CD8-positive, alpha-beta T cell (primary cell): ENCODE measurements at regions of chr7 and their contacts with region 1.

Region 1: GRCh38 chr7:5704534-5704922 is 76.9 kb downstream of the RNF216 start:
- DNase-seq: peak; percentile 53 to 87 (median 73)
- ATAC-seq: peak; percentile 18
- H3K4me3 ChIP-seq: no peak overlapping the region
- H3K4me3 Mint-ChIP-seq: no peak overlapping the region
- H3K27ac ChIP-seq: no peak overlapping the region
- H3K27ac Mint-ChIP-seq: no peak overlapping the region
- H3K4me1 ChIP-seq: peaks cover 27% of the 10 kb centered on the region
- H3K4me1 Mint-ChIP-seq: peaks cover 34% of the 10 kb centered on the region
- H3K27me3 ChIP-seq: no peaks in the 10 kb centered on the region
- H3K27me3 Mint-ChIP-seq: no peaks in the 10 kb centered on the region
- CTCF ChIP-seq: peak; percentile 87

Region 2: GRCh38 chr7:5396999-5397663 is 307.4 kb before region 1 on chr7:
- CTCF ChIA-PET with region 1: no interaction called
- POLR2A ChIA-PET with region 1: no interaction called
- intact Hi-C with region 1: loop called in 1 of 2 experiments (anchors 10 kb)
- DNase-seq: peak; percentile 81 to 99 (median 92)
- ATAC-seq: peak; percentile 91
- H3K4me3 ChIP-seq: peak overlapping the region; percentile 83 to 96
- H3K4me3 Mint-ChIP-seq: peak overlapping the region; percentile 82
- H3K27ac ChIP-seq: peak overlapping the region; percentile 84 to 95
- H3K27ac Mint-ChIP-seq: peak overlapping the region; percentile 81
- H3K4me1 ChIP-seq: peaks cover 31% of the 10 kb centered on the region
- H3K4me1 Mint-ChIP-seq: peaks cover 26% of the 10 kb centered on the region
- H3K27me3 ChIP-seq: no peaks in the 10 kb centered on the region
- H3K27me3 Mint-ChIP-seq: no peaks in the 10 kb centered on the region
- CTCF ChIP-seq: no peak

Region 3: DNA sequence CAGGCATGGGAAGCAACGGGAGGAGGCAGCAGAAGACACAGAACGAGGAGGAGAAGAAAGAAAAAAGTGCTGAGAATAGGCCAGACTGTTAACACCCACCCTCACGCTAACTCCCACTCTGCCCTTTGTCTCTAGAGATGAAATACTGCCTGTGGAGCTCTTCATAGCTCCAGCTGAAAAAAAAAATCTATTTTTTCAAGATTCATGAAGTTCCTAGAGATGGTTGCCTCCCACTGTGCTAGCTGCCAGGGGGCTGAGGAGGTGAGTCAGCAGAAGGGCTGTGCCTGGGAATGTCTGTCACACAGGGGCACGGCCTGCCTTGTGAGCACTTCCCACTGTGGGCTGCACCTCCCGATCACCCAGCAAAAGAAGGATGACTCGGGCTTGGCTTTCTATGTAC is 67.6 kb before region 1 on chr7:
- CTCF ChIA-PET with region 1: interaction called, 3 read pairs
- POLR2A ChIA-PET with region 1: no interaction called
- intact Hi-C with region 1: loop called in 1 of 2 experiments (anchors 5 kb)
- DNase-seq: no peak
- ATAC-seq: no peak
- H3K4me3 ChIP-seq: no peak overlapping the region
- H3K4me3 Mint-ChIP-seq: no peak overlapping the region
- H3K27ac ChIP-seq: no peak overlapping the region
- H3K27ac Mint-ChIP-seq: no peak overlapping the region
- H3K4me1 ChIP-seq: peaks cover 15% of the 10 kb centered on the region
- H3K4me1 Mint-ChIP-seq: peaks cover 27% of the 10 kb centered on the region
- H3K27me3 ChIP-seq: no peaks in the 10 kb centered on the region
- H3K27me3 Mint-ChIP-seq: no peaks in the 10 kb centered on the region
- CTCF ChIP-seq: no peak

Region 4: GRCh38 chr7:5677538-5678294 is 26.8 kb before region 1 on chr7:
- CTCF ChIA-PET with region 1: interaction called, 17 read pairs
- POLR2A ChIA-PET with region 1: interaction called, 3 read pairs
- intact Hi-C with region 1: no loop called
- DNase-seq: peak in 6 of 9 experiments; percentile 17 to 66 (median 48)
- ATAC-seq: peak; percentile 54
- H3K4me3 ChIP-seq: no peak overlapping the region
- H3K4me3 Mint-ChIP-seq: no peak overlapping the region
- H3K27ac ChIP-seq: no peak overlapping the region
- H3K27ac Mint-ChIP-seq: peak overlapping the region; percentile 30
- H3K4me1 ChIP-seq: peaks cover 36% of the 10 kb centered on the region
- H3K4me1 Mint-ChIP-seq: peaks cover 58% of the 10 kb centered on the region
- H3K27me3 ChIP-seq: no peaks in the 10 kb centered on the region
- H3K27me3 Mint-ChIP-seq: no peaks in the 10 kb centered on the region
- CTCF ChIP-seq: peak; percentile 27

Region 5: GRCh38 chr7:6148724-6149360 is 444.3 kb after region 1 on chr7:
- CTCF ChIA-PET with region 1: no interaction called
- POLR2A ChIA-PET with region 1: no interaction called
- intact Hi-C with region 1: no loop called
- DNase-seq: no peak
- ATAC-seq: no peak
- H3K4me3 ChIP-seq: no peak overlapping the region
- H3K4me3 Mint-ChIP-seq: no peak overlapping the region
- H3K27ac ChIP-seq: no peak overlapping the region
- H3K27ac Mint-ChIP-seq: no peak overlapping the region
- H3K4me1 ChIP-seq: no peaks in the 10 kb centered on the region
- H3K4me1 Mint-ChIP-seq: no peaks in the 10 kb centered on the region
- H3K27me3 ChIP-seq: no peaks in the 10 kb centered on the region
- H3K27me3 Mint-ChIP-seq: no peaks in the 10 kb centered on the region
- CTCF ChIP-seq: no peak

Region 6: GRCh38 chr7:7489546-7489945 is 1785.0 kb after region 1 on chr7:
- CTCF ChIA-PET with region 1: no interaction called
- POLR2A ChIA-PET with region 1: no interaction called
- intact Hi-C with region 1: no loop called
- DNase-seq: no peak
- ATAC-seq: no peak
- H3K4me3 ChIP-seq: no peak overlapping the region
- H3K4me3 Mint-ChIP-seq: no peak overlapping the region
- H3K27ac ChIP-seq: no peak overlapping the region
- H3K27ac Mint-ChIP-seq: no peak overlapping the region
- H3K4me1 ChIP-seq: no peaks in the 10 kb centered on the region
- H3K4me1 Mint-ChIP-seq: no peaks in the 10 kb centered on the region
- H3K27me3 ChIP-seq: no peaks in the 10 kb centered on the region
- H3K27me3 Mint-ChIP-seq: peaks cover 2% of the 10 kb centered on the region
- CTCF ChIP-seq: no peak